ENCODE measurements at regions of chr9 and their contacts with region 1.

Region 1: DNA sequence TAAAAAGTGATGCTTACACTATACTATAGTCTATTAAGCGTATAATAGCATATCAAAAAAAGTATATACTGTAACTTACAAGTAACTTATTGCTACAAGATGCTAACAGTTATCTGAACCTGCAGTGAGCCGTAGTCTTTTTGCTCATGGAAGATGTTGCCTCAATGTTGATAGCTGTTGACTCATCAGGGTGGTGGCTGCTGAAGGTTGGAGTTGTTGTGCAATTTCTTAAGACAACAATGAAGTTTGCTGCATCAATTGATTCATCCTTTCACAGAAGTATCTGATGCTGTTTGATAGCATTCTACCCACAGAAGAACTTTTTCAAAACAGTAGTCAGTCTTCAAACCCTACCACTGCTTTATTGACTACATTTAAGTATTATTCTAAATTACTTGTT is 7.9 kb upstream of the C9orf40 start:
- DNase-seq: no peak
- ATAC-seq: peak; percentile 59 to 70 (median 60)
- H3K4me3 ChIP-seq: no peak overlapping the region
- H3K4me3 Mint-ChIP-seq: peak overlapping the region; percentile 59
- H3K27ac ChIP-seq: no peak overlapping the region
- H3K27ac Mint-ChIP-seq: peak overlapping the region; percentile 72 to 84
- H3K4me1 ChIP-seq: peaks cover 7% of the 10 kb centered on the region
- H3K4me1 Mint-ChIP-seq: peaks cover 44 to 60% of the 10 kb centered on the region in 2 donors
- H3K27me3 ChIP-seq: no peaks in the 10 kb centered on the region
- H3K27me3 Mint-ChIP-seq: no peaks in the 10 kb centered on the region
- CTCF ChIP-seq: no peak

Region 2: GRCh38 chr9:74946686-74947085 is 13.9 kb before region 1 on chr9:
- intact Hi-C with region 1: loop called (anchors 2 kb)
- DNase-seq: no peak
- ATAC-seq: no peak
- H3K4me3 ChIP-seq: no peak overlapping the region
- H3K4me3 Mint-ChIP-seq: no peak overlapping the region
- H3K27ac ChIP-seq: no peak overlapping the region
- H3K27ac Mint-ChIP-seq: no peak overlapping the region
- H3K4me1 ChIP-seq: peaks cover 11% of the 10 kb centered on the region
- H3K4me1 Mint-ChIP-seq: peaks cover 35 to 42% of the 10 kb centered on the region in 2 donors
- H3K27me3 ChIP-seq: no peaks in the 10 kb centered on the region
- H3K27me3 Mint-ChIP-seq: no peaks in the 10 kb centered on the region
- CTCF ChIP-seq: no peak